ENCODE measurements at regions of chr1 and their contacts with region 1.

Region 1: GRCh38 chr1:228165372-228166169 is at the start of gene IBA57:
- DNase-seq: peak; percentile 100
- ATAC-seq: peak; percentile 89
- H3K4me3 Mint-ChIP-seq: peak within 1 kb of the TSS; percentile 80
- H3K27ac Mint-ChIP-seq: peak within 1 kb of the TSS; percentile 87
- H3K4me1 Mint-ChIP-seq: peaks cover 35% of the 10 kb centered on the region
- H3K27me3 Mint-ChIP-seq: no peaks in the 10 kb centered on the region
- total RNA-seq, gene IBA57: 6.0 to 8.3 TPM

Region 2: DNA sequence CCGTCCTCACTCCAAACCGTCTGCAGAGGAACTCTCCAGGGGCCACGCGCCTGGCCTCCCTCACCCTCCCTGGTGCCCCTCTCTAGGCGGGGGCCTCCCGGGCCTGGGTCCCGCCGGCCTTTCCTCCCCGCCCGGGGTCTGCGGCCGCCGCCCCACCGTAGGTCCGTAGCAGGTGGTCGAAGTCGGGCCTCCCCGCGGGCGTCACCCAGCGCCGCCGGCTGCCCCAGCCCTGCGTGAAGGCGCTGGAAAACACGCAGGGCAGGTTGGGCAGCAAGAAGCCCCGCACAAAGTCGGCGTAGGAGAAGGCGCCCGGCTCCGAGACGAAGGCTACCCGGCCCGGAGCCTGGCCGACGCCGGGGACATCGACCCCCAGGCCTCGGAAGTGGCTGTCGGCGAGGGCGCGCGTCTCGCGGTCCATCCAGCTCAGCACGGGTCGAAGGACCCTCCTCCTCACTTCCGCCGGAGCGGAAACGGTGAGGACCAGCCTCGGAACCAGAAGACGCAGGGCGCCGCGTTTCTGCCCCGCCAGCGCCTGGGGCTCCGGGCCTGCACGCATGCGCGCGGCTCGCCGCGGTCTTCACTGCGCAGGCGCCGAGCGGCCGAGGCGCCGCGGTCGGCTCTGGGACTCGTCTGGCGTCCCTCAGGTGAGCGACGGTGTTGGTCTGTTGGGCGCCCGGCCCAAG is 430.6 kb before region 1 on chr1 and contains the starts of genes JMJD4 and SNAP47:
- CTCF ChIA-PET with region 1: no interaction called
- POLR2A ChIA-PET with region 1: no interaction called
- intact Hi-C with region 1: loop called in 1 of 2 experiments (anchors 1 kb)
- DNase-seq: peak; percentile 95
- ATAC-seq: peak; percentile 94
- H3K4me3 Mint-ChIP-seq: peak within 1 kb of the TSS; percentile 89
- H3K27ac Mint-ChIP-seq: peak within 1 kb of the TSS; percentile 86
- H3K4me1 Mint-ChIP-seq: peaks cover 25% of the 10 kb centered on the region
- H3K27me3 Mint-ChIP-seq: no peaks in the 10 kb centered on the region
- total RNA-seq, gene JMJD4: 14.4 to 18.1 TPM
- total RNA-seq, gene SNAP47: 30.3 to 31.2 TPM

Region 3: GRCh38 chr1:228037401-228038386 is 127.9 kb before region 1 on chr1:
- CTCF ChIA-PET with region 1: no interaction called
- POLR2A ChIA-PET with region 1: no interaction called
- intact Hi-C with region 1: no loop called
- DNase-seq: peak; percentile 75
- ATAC-seq: peak; percentile 96
- H3K4me3 Mint-ChIP-seq: no peak overlapping the region
- H3K27ac Mint-ChIP-seq: no peak overlapping the region
- H3K4me1 Mint-ChIP-seq: no peaks in the 10 kb centered on the region
- H3K27me3 Mint-ChIP-seq: peaks cover 25% of the 10 kb centered on the region

Region 4: DNA sequence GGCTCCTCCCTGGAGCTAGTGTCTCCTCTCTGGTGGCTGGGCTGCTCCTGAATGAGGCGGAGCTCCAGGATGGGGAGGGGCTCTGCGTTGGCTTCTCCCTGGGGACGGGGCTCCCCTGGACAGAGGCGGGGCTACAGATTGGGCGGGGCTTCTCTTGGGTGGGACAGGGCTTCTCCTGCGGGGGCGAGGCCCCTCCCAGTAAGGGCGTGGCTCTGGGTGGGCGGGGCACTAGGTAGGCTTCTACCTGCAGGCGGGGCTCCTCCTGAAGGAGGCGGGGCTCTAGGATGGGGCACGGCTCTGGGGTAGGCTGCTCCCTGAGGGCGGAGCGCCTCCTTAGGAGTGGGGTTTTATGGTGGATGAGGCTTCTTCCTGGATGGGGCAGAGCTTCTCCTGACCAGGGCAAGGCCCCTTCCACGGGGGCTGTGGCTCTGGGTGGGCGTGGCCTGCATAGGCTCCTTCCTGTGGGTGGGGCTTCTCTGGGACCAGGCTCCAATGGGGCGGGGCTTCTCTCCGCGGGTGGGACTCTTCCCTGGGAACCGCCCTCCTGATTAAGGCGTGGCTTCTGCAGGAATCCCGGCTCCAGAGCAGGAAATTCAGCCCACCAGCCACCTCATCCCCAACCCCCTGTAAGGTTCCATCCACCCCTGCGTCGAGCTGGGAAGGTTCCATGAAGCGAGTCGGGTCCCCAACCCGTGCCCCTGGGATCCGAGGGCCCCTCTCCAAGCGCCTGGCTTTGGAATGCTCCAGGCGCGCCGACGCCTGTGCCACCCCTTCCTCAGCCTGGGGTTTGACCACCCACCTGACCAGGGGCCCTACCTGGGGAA is 105.7 kb before region 1 on chr1:
- CTCF ChIA-PET with region 1: no interaction called
- POLR2A ChIA-PET with region 1: no interaction called
- intact Hi-C with region 1: loop called in 1 of 2 experiments (anchors 1 kb)
- DNase-seq: peak; percentile 91
- ATAC-seq: peak; percentile 85
- H3K4me3 Mint-ChIP-seq: peak overlapping the region; percentile 51
- H3K27ac Mint-ChIP-seq: no peak overlapping the region
- H3K4me1 Mint-ChIP-seq: peaks cover 9% of the 10 kb centered on the region
- H3K27me3 Mint-ChIP-seq: peaks cover 30% of the 10 kb centered on the region

Region 5: GRCh38 chr1:228131766-228132165 is 33.8 kb before region 1 on chr1:
- CTCF ChIA-PET with region 1: interaction called, 30 read pairs
- POLR2A ChIA-PET with region 1: interaction called, 8 read pairs
- intact Hi-C with region 1: loop called (anchors 2 kb)
- DNase-seq: no peak
- ATAC-seq: no peak
- H3K4me3 Mint-ChIP-seq: no peak overlapping the region
- H3K27ac Mint-ChIP-seq: no peak overlapping the region
- H3K4me1 Mint-ChIP-seq: peaks cover 3% of the 10 kb centered on the region
- H3K27me3 Mint-ChIP-seq: peaks cover 5% of the 10 kb centered on the region

Region 6: GRCh38 chr1:228405987-228406265 is 240.4 kb after region 1 on chr1:
- CTCF ChIA-PET with region 1: interaction called, 3 read pairs
- POLR2A ChIA-PET with region 1: interaction called, 4 read pairs
- intact Hi-C with region 1: loop called in 1 of 2 experiments (anchors 1 kb)
- DNase-seq: no peak
- ATAC-seq: peak; percentile 2
- H3K4me3 Mint-ChIP-seq: peak overlapping the region; percentile 92
- H3K27ac Mint-ChIP-seq: peak overlapping the region; percentile 93
- H3K4me1 Mint-ChIP-seq: peaks cover 46% of the 10 kb centered on the region
- H3K27me3 Mint-ChIP-seq: no peaks in the 10 kb centered on the region

Measured in activated CD4-positive, alpha-beta T cell treated with anti-CD3 and anti-CD28 coated beads for 36 hours (primary cell).